ENCODE measurements at regions of chr14 and their contacts with region 1.

Region 1: DNA sequence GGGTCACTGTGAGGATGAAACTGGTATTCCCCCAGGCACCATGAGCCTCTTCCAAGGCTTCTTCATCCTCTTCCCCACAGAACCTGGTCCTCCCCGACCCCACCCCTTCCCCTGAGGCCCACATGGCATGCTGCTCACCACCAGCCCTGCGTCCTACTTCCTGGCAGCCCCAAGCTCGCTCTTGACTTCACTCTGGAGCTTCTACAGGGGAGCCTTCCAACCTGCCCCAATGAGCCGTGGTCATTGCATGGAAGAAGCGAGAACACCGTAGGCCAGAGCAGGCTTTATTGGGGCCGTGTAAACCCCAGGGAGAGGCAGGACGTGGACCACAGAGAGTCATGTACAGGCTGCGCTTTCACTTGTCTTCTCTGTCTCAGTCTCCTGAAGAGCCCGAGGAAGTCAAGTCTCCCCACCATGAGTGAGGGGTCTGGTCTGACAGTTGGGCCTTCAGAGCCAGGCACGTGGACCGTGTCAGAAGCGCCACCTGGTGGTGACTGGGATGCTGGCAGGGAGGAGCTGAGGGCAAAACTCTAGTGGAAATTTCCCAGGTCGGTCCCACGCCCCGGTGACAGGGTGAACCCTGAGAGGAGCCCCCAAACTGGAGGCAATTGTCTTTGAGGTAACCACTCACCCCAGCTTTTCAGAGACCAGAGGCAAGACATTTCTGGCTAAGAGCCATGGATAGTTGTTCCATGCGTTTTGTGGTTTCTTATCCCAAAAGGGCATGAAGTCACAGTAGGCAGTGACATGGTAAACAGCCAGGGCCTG is 17.5 kb downstream of the RPS6KL1 start:
- DNase-seq: peak; percentile 73 to 75 (median 74)
- ATAC-seq: peak; percentile 60 to 76 (median 70)
- H3K4me3 ChIP-seq: no peak overlapping the region
- H3K27ac ChIP-seq: no peak overlapping the region
- H3K4me1 ChIP-seq: no peaks in the 10 kb centered on the region
- H3K27me3 ChIP-seq: no peaks in the 10 kb centered on the region
- CTCF ChIP-seq: peak; percentile 84 to 96 (median 94)
- POLR2A ChIP-seq: no peak

Region 2: GRCh38 chr14:74754157-74754556 is 151.4 kb before region 1 on chr14:
- intact Hi-C with region 1: no loop called
- DNase-seq: no peak
- ATAC-seq: no peak
- H3K4me3 ChIP-seq: no peak overlapping the region
- H3K27ac ChIP-seq: no peak overlapping the region
- H3K4me1 ChIP-seq: no peaks in the 10 kb centered on the region
- H3K27me3 ChIP-seq: no peaks in the 10 kb centered on the region
- CTCF ChIP-seq: no peak
- POLR2A ChIP-seq: no peak

Region 3: GRCh38 chr14:74841230-74842207 is 64.0 kb before region 1 on chr14:
- intact Hi-C with region 1: no loop called
- DNase-seq: no peak
- ATAC-seq: peak in 2 of 4 donors; percentile 14 to 22
- H3K4me3 ChIP-seq: no peak overlapping the region
- H3K27ac ChIP-seq: no peak overlapping the region
- H3K4me1 ChIP-seq: no peaks in the 10 kb centered on the region
- H3K27me3 ChIP-seq: no peaks in the 10 kb centered on the region
- CTCF ChIP-seq: no peak
- POLR2A ChIP-seq: no peak

Region 4: DNA sequence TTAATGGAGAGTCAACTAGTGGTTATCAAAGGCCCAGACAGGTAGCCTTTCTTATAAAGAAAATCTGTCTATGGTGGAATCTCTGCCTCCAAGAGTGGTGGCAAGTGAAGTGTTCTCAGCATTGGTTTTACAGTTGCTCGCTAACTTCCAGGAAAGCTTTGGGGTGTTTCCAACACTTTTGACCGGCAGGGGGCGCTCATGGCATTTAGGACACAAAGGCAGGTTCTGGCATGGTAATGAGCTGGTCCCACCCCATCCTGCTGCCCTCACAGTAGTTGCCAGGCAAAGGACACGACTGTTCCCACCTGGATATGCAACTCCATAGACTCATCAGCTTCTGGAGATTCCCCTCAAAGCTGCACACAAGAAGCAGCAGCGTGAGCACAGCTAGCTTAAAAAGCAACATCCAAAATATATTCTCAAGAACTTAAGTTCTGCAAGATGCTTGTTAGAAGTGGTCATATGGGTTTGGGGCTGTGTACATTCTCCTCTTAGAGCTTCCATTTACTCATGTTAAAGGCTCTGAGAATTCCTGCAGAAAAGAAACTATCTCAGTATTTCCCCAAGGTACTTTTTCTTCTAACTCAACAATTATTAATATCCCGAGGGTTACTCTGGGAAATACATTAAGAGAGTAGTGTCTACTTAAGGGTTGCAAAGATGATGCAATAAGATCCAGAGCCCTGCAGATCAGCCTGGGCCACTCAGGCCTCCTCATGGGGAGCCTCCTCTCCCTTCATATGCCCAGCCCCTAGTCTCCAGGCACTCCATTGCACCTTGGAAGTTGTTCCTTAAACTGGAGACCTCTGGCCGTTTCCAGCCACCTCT is 44.4 kb before region 1 on chr14:
- intact Hi-C with region 1: loop called (anchors 5 kb)
- DNase-seq: peak; percentile 86 to 88 (median 87)
- ATAC-seq: peak; percentile 80 to 90 (median 86)
- H3K4me3 ChIP-seq: no peak overlapping the region
- H3K27ac ChIP-seq: no peak overlapping the region
- H3K4me1 ChIP-seq: peaks cover 0 to 5% (median 1%) of the 10 kb centered on the region in 4 donors
- H3K27me3 ChIP-seq: no peaks in the 10 kb centered on the region
- CTCF ChIP-seq: peak; percentile 80 to 95 (median 87)
- POLR2A ChIP-seq: no peak

Region 5: DNA sequence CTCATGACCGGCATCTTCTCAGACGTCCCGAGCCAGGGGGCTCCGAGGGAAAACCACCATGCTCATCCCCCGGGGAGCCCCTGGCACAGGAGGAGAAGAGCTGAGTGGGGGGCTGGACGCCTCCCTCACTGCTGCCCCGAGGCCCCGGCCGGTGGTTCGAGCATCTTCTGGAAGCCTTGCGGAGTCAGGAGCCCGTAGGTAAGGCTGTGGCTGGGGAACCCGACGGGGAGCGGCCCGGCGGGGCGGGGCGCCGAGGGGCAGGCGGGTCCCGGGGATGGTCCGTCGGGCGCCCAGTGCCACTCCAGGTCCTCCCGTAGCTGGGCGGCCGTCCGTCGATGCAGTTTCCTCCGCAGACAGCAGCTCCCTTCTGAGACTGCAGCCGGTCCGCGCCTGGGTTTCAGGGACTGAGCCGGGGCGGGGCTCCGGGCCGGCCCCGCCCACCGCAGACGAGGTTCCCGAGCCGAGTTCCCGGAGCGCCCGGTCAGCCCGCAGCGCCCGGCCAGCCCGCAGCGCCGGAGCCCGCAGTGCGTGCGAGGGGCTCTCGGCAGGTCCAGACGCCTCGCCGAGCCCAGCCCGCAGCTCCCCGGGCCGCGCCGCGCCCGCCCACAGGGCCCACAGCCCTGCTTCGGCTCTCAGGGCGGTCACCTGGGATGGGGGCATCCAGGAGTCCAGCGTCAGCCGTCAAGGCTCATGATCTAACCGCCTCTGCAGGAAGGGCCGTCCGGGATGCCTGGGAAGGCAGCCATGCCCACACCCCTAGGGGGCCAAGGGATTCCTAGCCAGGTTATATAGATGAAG is 49.9 kb after region 1 on chr14 and contains the start of gene PGF:
- intact Hi-C with region 1: no loop called
- DNase-seq: peak; percentile 73 to 77 (median 75)
- ATAC-seq: peak; percentile 90 to 95 (median 92)
- H3K4me3 ChIP-seq: peak within 1 kb of the TSS; percentile 32 to 48 (median 47)
- H3K27ac ChIP-seq: peak within 1 kb of the TSS in 1 of 3 donors; percentile 14
- H3K4me1 ChIP-seq: peaks cover 0 to 4% (median 0%) of the 10 kb centered on the region in 4 donors
- H3K27me3 ChIP-seq: no peaks in the 10 kb centered on the region
- CTCF ChIP-seq: no peak
- POLR2A ChIP-seq: peak; percentile 66
- total RNA-seq, gene PGF: 0.55 to 4.2 (median 2.1) TPM